Activated CD8-positive, alpha-beta T cell treated with anti-CD3 and anti-CD28 coated beads, Interleukin-2, amount 10 ng/mL, durations not matched to agents 7 days and 5 days (primary cell): ENCODE measurements at regions of chr22 and their contacts with region 1.

Region 1: DNA sequence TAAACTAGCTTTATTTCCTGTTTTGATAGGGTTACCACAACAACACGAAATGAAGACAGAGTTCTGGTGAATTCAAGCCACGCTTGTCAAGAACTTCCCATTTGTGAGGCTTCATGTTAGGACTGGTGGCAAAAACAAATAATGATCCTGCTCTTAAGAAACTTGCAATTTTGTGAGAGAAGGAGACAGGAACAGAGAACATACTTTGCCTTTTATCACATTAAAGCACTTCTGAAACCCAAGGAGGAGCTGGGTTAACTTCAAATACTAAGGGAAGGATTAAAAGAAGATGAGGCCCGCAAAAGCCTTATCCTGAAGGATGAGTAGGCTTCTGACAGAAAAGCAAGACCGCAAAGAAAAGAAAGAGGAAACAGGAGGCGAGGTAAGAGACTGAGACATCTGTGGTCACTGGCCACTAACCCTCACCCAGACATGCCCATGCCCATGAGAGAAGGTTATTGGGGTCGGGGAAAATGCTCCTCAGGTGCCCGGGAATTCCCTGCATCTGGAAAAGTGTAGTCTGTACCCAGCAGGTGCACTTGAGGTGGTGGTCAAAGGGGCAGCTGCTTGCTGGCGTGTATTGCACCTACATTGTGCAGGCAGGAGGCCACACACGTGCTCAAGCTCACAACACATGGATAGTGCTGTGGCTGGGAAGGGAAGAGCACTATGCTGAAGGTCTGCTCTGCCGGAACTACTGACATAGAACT is 50.5 kb downstream of the MAPK1 start:
- DNase-seq: peak; percentile 61
- ATAC-seq: peak; percentile 89
- H3K4me3 Mint-ChIP-seq: peak overlapping the region; percentile 67
- H3K27ac Mint-ChIP-seq: peak overlapping the region; percentile 87
- H3K4me1 Mint-ChIP-seq: peaks cover 48% of the 10 kb centered on the region
- H3K27me3 Mint-ChIP-seq: no peaks in the 10 kb centered on the region

Region 2: GRCh38 chr22:21867528-21868266 is 50.8 kb after region 1 on chr22 and contains the start of gene MAPK1:
- CTCF ChIA-PET with region 1: no interaction called
- POLR2A ChIA-PET with region 1: interaction called, 12 read pairs
- DNase-seq: peak; percentile 96
- ATAC-seq: peak; percentile 94
- H3K4me3 Mint-ChIP-seq: peak within 1 kb of the TSS; percentile 93
- H3K27ac Mint-ChIP-seq: peak within 1 kb of the TSS; percentile 95
- H3K4me1 Mint-ChIP-seq: peaks cover 38% of the 10 kb centered on the region
- H3K27me3 Mint-ChIP-seq: peaks cover 4% of the 10 kb centered on the region
- total RNA-seq, gene MAPK1: 141 to 144 TPM